Breast epithelium (tissue), 4 donors: ENCODE measurements at regions of chr18 and their contacts with region 1.

Region 1: GRCh38 chr18:74898965-74899364 is 301.3 kb downstream of the ZNF407 start:
- DNase-seq: no peak
- H3K4me3 ChIP-seq: no peak overlapping the region
- H3K27ac ChIP-seq: peak overlapping the region in 1 of 2 donors; percentile 29
- H3K4me1 ChIP-seq: no peaks in the 10 kb centered on the region
- H3K27me3 ChIP-seq: no peaks in the 10 kb centered on the region
- CTCF ChIP-seq: no peak
- POLR2A ChIP-seq: no peak

Region 2: GRCh38 chr18:74957601-74958224 is 58.7 kb after region 1 on chr18:
- intact Hi-C with region 1: loop called (anchors 2 kb)
- DNase-seq: no peak
- H3K4me3 ChIP-seq: no peak overlapping the region
- H3K27ac ChIP-seq: no peak overlapping the region
- H3K4me1 ChIP-seq: no peaks in the 10 kb centered on the region
- H3K27me3 ChIP-seq: no peaks in the 10 kb centered on the region
- CTCF ChIP-seq: no peak
- POLR2A ChIP-seq: no peak